PC-9 (cell line): ENCODE measurements at regions of chr4 and their contacts with region 1.

Region 1: DNA sequence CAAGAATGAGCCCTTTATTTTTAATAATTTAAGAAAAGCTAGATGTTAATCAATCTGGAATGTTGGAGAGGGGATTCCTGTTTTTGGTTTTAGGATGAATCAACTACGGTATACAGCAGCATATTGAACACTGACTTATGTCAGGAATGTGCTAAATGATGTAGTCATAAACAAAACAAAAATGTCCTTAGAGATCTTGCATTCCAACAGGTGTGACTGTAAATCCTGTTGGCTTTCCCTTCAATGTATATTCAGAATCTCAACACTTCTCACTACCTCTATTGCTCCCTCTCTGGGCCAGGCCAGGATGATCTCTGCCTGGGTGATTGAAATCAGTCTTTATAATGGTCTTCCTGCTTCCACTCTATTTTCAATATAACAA is 37.8 kb upstream of the BDH2 start:
- DNase-seq: peak; percentile 5 to 87
- H3K4me3 ChIP-seq: no peak overlapping the region
- H3K27ac ChIP-seq: peak overlapping the region; percentile 73
- H3K4me1 ChIP-seq: peaks cover 20% of the 10 kb centered on the region
- H3K27me3 ChIP-seq: no peaks in the 10 kb centered on the region
- CTCF ChIP-seq: no peak

Region 2: GRCh38 chr4:101621120-101621519 is 1516.3 kb before region 1 on chr4:
- CTCF ChIA-PET with region 1: no interaction called
- POLR2A ChIA-PET with region 1: no interaction called
- intact Hi-C with region 1: no loop called
- DNase-seq: no peak
- H3K4me3 ChIP-seq: no peak overlapping the region
- H3K27ac ChIP-seq: no peak overlapping the region
- H3K4me1 ChIP-seq: no peaks in the 10 kb centered on the region
- H3K27me3 ChIP-seq: no peaks in the 10 kb centered on the region
- CTCF ChIP-seq: no peak

Region 3: DNA sequence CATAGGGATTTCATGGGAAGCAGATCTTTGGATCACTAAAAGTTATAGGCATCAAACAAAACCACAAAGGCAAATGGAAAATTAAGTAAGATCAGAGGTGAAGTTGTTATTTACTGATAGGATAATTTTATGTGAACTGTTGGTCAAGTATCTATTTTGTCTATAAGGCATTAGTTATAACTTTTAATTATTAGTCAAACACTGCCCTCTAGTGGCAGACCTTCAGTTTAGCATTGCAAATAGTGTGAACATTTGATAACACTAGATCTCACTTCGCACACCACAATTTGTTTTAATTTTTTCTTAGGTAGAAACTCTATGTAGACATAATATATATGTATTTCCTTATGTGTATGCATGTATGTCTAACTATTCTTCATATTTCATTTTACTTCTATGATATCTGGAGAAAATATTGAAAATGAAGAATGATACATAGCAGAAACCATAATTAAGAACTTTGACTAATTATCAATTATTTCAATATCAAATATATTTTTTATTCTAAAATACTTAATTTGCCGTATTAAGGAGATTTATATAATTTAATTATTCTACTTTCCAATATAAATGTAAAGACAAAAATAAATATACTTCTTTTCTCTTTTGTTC is 796.8 kb after region 1 on chr4:
- CTCF ChIA-PET with region 1: no interaction called
- POLR2A ChIA-PET with region 1: no interaction called
- intact Hi-C with region 1: loop called (anchors 5 kb)
- DNase-seq: no peak
- H3K4me3 ChIP-seq: no peak overlapping the region
- H3K27ac ChIP-seq: no peak overlapping the region
- H3K4me1 ChIP-seq: no peaks in the 10 kb centered on the region
- H3K27me3 ChIP-seq: no peaks in the 10 kb centered on the region
- CTCF ChIP-seq: peak; percentile 80